ENCODE measurements at regions of chr12 and their contacts with region 1.

Region 1: DNA sequence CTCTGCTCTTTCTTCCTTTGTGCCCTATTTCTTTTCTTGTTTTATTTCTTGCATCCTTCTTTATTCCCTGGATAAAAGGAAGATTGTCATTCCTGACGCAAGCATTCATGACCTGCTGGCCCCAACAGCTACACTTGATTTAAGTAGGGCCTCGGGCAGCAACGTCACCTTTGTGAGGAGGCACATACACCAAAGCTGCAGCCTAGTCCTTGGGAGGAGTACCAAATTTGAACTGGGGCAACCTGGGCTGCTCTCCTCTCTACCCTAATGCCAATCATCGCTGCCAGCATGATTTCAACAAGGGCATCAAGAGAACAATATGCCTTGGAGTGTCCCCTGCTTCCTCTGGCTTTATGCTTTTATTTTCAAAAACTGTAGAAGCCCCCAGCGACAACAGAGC is 76.4 kb downstream of the C12orf50 start:
- DNase-seq: no peak
- CTCF ChIP-seq: no peak

Region 2: GRCh38 chr12:87924149-87924548 is 28.7 kb before region 1 on chr12:
- CTCF ChIA-PET with region 1: no interaction called
- POLR2A ChIA-PET with region 1: no interaction called
- DNase-seq: no peak
- CTCF ChIP-seq: no peak

Region 3: GRCh38 chr12:87939182-87939581 is 13.7 kb before region 1 on chr12:
- CTCF ChIA-PET with region 1: interaction called, 11 read pairs
- POLR2A ChIA-PET with region 1: interaction called, 4 read pairs
- DNase-seq: no peak
- CTCF ChIP-seq: no peak